ENCODE measurements at regions of chr6 and their contacts with region 1.

Region 1: GRCh38 chr6:29764422-29765196 is 41.4 kb downstream of the HLA-F start:
- DNase-seq: no peak
- ATAC-seq: no peak
- H3K4me3 ChIP-seq: no peak overlapping the region
- H3K4me3 Mint-ChIP-seq: no peak overlapping the region
- H3K27ac ChIP-seq: no peak overlapping the region
- H3K27ac Mint-ChIP-seq: no peak overlapping the region
- H3K4me1 ChIP-seq: no peaks in the 10 kb centered on the region
- H3K4me1 Mint-ChIP-seq: no peaks in the 10 kb centered on the region
- H3K27me3 ChIP-seq: no peaks in the 10 kb centered on the region
- H3K27me3 Mint-ChIP-seq: peaks cover 0 to 17% of the 10 kb centered on the region in 2 donors
- CTCF ChIP-seq: no peak

Region 2: DNA sequence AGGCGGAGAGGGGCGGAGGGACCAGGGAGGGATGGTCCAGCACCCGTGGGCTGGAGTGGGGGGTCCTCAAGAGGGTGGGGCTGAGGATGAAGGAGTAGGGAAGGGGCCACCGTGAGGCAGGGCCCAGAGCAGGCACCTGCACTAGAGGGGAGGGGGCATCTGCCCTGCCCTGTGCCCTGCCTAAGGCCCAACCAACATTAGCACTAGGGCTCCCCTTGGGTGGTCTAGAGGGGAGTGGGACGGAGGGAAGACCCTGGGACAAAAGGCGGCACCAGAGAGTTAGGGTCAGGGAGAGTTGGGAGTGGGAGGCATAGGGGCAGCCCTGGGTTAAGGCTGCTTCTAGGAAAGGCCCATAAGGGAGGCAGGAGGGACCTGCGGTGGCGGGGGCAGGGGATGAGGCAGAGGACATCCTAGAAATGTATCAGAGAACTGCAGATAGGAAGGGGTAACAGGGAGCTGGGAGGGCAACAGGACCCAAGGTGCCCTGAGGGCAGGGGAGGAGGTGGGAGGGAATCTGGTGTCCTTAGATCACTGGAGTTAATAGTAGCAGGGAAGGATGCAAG is 16.8 kb before region 1 on chr6:
- intact Hi-C with region 1: no loop called
- DNase-seq: no peak
- ATAC-seq: no peak
- H3K4me3 ChIP-seq: peak overlapping the region; percentile 47
- H3K4me3 Mint-ChIP-seq: peak overlapping the region; percentile 99
- H3K27ac ChIP-seq: no peak overlapping the region
- H3K27ac Mint-ChIP-seq: peak overlapping the region; percentile 74 to 96
- H3K4me1 ChIP-seq: peaks cover 29% of the 10 kb centered on the region
- H3K4me1 Mint-ChIP-seq: peaks cover 45 to 65% of the 10 kb centered on the region in 2 donors
- H3K27me3 ChIP-seq: no peaks in the 10 kb centered on the region
- H3K27me3 Mint-ChIP-seq: no peaks in the 10 kb centered on the region
- CTCF ChIP-seq: no peak

Region 3: DNA sequence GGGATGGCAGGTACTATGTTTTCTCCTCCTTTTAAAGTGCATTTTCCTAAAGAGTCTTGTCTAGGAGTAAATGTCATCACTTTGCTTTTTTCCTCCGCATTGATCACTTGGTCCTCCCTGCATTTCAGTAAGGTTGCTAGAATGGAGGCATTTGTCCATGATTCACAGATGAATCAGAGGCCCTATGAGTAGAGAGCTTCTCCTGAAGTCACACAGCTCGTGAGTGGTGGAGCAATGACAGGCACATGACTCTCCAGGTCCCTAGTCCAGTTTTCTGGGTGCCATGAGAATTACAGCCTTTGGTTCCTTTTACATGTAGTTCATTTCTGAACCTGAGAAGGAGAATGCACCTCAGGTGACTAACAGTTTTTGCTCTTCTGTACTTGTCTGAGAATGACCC is 228.2 kb after region 1 on chr6:
- intact Hi-C with region 1: loop called (anchors 1 kb)
- DNase-seq: no peak
- ATAC-seq: no peak
- H3K4me3 ChIP-seq: no peak overlapping the region
- H3K4me3 Mint-ChIP-seq: no peak overlapping the region
- H3K27ac ChIP-seq: no peak overlapping the region
- H3K27ac Mint-ChIP-seq: no peak overlapping the region
- H3K4me1 ChIP-seq: no peaks in the 10 kb centered on the region
- H3K4me1 Mint-ChIP-seq: no peaks in the 10 kb centered on the region
- H3K27me3 ChIP-seq: no peaks in the 10 kb centered on the region
- H3K27me3 Mint-ChIP-seq: peaks cover 26 to 29% of the 10 kb centered on the region in 2 donors
- CTCF ChIP-seq: no peak